ENCODE measurements at regions of chr18 and their contacts with region 1.

Region 1: GRCh38 chr18:3771121-3771971 is 321.4 kb downstream of the TGIF1 start:
- H3K4me3 ChIP-seq: peak overlapping the region; percentile 38
- H3K27ac ChIP-seq: peak overlapping the region; percentile 31; the same call in 1 of the 2 replicates
- H3K4me1 ChIP-seq: peaks cover 2% of the 10 kb centered on the region; the same call in 1 of the 2 replicates
- CTCF ChIP-seq: peak; percentile 92

Region 2: DNA sequence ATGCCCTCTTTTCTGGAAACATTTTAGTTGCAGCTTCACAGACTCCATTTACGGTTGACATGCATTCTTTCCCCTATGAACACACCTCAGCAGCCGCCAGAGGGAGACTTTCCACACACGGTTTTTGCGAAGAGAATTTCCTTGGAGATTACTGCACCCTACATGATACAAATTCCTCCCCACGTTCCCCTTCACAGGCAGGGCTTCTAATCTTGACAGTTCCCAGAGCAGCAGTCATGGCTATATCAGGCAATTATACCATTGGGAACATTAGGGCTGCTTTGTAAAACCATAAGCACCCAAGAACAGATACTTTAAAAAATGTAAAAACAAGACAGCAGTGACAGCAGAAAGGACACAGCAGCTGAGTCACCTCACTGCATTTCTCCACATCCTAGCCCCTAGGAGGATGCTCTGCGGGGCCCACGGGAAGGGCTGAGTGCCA is 67.6 kb before region 1 on chr18:
- CTCF ChIA-PET with region 1: interaction called, 21 read pairs
- POLR2A ChIA-PET with region 1: no interaction called
- H3K4me3 ChIP-seq: no peak overlapping the region
- H3K27ac ChIP-seq: no peak overlapping the region
- H3K4me1 ChIP-seq: no peaks in the 10 kb centered on the region
- CTCF ChIP-seq: peak; percentile 77

Region 3: DNA sequence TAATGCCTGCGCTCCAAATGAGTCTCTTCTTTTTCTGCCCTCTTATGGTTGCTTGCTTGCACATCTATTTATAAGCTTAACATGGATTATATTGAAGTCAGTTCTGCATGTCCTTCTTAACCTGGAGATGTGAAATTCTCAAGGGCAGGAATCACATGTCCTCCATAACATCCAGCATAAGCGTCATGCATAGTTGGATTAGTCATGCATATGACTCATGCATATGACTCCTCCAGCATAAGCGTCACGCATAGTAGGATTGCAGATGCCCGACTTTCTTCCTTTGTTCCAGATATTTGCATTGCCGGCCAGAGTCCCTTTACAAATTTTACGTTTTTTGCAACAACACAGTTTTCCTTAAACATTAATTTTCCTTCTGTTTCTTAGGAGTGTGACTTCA is 12.8 kb before region 1 on chr18:
- CTCF ChIA-PET with region 1: interaction called, 28 read pairs
- POLR2A ChIA-PET with region 1: no interaction called
- H3K4me3 ChIP-seq: no peak overlapping the region
- H3K27ac ChIP-seq: no peak overlapping the region
- H3K4me1 ChIP-seq: no peaks in the 10 kb centered on the region
- CTCF ChIP-seq: no peak

Region 4: DNA sequence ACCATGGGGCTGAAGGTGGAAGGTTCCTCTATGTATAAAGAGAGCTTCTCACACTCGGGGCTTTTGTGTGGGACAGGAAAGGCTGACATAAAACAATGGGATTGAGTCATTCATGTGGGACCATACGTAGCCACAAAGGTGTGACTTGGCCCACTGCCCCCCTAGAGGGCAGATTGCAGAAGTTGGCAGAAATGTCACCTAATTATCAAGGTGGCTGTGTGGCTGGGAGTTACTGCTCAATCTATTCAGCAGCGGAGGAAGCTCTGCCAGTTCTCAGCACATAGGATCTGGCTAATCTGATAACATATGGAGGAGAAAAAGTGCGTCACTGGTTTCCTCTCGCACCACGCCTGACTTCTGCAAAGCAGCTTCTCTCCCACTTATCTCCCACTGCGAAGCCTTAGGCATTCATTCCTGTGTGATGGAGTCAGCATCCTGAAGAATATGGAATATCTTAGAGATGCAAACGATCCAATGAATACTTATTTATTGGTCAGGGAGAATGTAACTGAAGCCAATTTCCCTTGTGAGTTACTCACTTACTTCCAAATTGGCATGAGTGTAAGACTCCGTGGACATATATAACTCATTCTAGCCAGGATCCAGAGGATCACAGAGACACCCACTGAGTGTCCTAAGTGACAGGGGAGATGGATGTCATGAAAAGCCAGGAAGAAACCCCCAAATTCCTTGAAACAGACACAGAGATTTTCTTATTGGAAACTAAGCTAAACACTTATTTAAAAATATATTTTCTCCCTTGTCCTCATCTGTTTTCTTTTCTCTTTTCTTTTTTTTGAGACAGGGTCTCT is 23.4 kb after region 1 on chr18:
- CTCF ChIA-PET with region 1: interaction called, 28 read pairs
- POLR2A ChIA-PET with region 1: interaction called, 6 read pairs
- H3K4me3 ChIP-seq: no peak overlapping the region
- H3K27ac ChIP-seq: no peak overlapping the region
- H3K4me1 ChIP-seq: peaks cover 5% of the 10 kb centered on the region
- CTCF ChIP-seq: no peak

Region 5: GRCh38 chr18:3857544-3857943 is 86.2 kb after region 1 on chr18:
- CTCF ChIA-PET with region 1: interaction called, 10 read pairs
- POLR2A ChIA-PET with region 1: no interaction called
- H3K4me3 ChIP-seq: no peak overlapping the region
- H3K27ac ChIP-seq: no peak overlapping the region
- H3K4me1 ChIP-seq: no peaks in the 10 kb centered on the region
- CTCF ChIP-seq: no peak

Region 6: DNA sequence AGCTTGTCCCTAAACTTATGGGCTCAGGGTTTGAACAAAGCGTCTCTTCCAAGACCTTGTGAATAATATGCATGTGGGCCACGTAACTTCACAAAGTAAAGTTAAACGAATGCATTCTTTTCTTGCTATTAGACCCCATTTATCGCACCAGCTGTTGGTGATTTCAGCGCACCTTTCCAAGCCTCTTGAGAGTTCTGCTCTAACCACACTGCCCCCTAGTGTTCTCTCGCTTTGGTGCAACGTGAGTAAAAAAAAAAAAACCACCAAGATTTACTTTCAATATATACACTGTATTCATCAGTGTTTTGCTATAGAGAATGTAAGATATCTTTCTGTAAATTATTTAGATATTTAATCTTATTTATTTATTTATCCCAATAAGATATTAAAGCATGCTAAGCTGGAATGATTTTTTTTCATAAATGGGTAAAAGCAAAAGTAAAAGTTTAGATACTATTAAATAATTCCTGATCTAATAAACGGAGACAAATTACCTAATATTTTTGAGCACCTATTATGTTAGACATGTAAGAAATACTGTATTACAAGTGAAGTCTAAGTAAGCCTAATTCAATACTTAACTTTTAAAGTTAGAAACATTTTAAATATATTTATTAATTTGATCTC is 224.2 kb after region 1 on chr18:
- CTCF ChIA-PET with region 1: interaction called, 50 read pairs
- POLR2A ChIA-PET with region 1: no interaction called
- H3K4me3 ChIP-seq: no peak overlapping the region
- H3K27ac ChIP-seq: no peak overlapping the region
- H3K4me1 ChIP-seq: no peaks in the 10 kb centered on the region
- CTCF ChIP-seq: no peak; the same call in 1 of the 2 replicates

Measured in HEK293 (cell line).